ENCODE measurements at regions of chr18 and their contacts with region 1.

Region 1: DNA sequence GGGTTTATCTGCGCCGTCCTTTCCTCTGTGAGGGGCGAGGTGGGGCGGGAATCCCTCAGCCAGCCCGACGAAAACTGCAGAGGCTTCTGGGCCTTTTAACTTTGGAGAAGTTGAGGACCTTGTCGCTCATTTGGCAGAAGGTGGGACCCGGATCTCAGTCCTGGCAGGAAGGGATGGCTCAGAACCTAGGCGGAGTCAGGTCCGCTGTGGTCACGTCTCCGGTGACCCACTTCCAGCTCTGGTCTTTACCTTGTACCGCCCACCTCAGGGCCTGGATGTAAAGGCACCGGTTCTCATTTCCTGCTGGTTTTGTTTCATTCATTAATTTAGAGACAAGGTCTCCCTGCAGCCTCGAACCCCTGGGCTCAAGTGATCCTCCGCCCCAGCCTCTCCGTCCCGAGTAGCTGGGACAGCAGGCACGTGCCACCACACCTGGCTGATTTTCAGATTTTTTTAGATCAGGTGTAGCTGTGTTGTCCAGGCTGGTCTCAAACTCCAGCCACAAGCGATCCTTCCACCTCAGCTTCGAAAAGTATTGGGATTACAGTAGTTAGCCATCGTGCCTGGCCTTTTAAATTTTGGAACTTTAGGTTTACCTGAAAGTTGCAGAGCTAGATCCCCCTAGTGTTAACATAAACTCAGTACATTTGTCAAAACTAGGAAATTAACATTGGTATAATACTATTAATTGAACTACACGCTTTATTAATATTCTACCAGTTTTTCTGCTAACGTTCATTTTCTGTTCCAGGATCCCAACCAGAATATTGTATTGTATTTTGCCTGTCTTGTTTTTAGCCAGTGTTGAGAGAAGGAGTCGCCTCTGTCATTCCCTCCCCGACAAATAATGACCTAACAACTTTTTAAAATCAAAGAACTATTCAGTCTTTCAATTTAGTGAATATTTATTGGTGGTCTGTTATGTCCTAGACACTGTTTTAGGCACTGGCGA is 852 bp downstream of the POLI start:
- DNase-seq: peak in 6 of 10 donors; percentile 11 to 90 (median 26)

Region 2: GRCh38 chr18:53687002-53687401 is 583.2 kb before region 1 on chr18:
- intact Hi-C with region 1: no loop called
- DNase-seq: no peak

Region 3: GRCh38 chr18:54224379-54225014 is 45.7 kb before region 1 on chr18 and contains the start of gene MBD2:
- intact Hi-C with region 1: loop called (anchors 1 kb)
- DNase-seq: peak; percentile 87 to 99 (median 94)

Region 4: GRCh38 chr18:54357660-54358494 is 87.7 kb after region 1 on chr18 and contains the starts of genes C18orf54 and STARD6:
- intact Hi-C with region 1: loop called (anchors 5 kb)
- DNase-seq: peak; percentile 76 to 97 (median 83)

Measured in posterior cingulate gyrus (tissue), 11 donors.